Heart left ventricle (tissue), 16 donors: ENCODE measurements at regions of chr12 and their contacts with region 1.

Region 1: DNA sequence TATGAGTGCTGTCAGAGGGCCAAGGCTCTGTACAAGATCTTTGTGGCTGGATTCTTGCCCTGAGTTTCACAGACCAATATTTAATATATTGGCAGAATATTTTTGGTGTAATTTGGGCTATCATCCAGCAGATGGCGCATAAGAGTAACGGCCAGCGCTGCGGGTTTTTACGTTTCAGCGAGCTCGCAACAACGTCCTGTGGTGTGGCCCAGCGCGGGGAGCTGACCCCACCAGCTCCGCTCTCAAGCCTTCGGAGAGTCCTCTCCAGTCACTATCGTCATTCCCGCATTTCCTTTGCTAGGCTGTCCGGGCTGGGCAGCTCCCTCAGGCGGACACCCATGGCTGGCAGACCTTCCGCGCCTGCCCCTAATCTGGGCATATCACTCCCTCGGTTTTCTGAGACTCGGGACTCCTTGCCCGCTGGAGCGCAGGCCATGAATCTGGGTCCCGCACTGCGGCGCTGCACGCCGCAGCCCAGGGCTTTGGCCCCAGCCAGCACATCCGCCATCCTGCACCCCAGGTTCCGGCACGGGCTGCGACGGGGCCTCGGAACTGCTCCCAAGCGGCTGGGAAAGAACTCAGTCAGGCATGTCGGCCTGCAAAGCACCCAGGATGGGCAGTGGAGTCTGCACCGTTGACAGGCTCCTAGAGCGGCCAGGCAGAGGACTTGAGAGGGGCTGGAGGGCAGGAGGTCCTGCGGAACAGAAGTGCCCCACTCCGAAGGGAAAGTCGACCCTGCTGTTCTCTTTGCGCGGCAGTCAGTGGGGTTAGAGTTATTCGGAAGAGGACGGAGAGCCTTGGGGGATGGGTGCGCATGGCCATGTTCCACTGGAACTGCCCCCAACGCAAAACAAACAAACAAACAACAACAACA is 18.4 kb downstream of the OLR1 start:
- DNase-seq: peak; percentile 62 to 85 (median 71)
- ATAC-seq: peak; percentile 83 to 95 (median 94)
- H3K4me3 ChIP-seq: peak overlapping the region; percentile 34 to 74 (median 65)
- H3K27ac ChIP-seq: peak overlapping the region; percentile 30 to 90 (median 78)
- H3K4me1 ChIP-seq: peaks cover 0 to 14% (median 5%) of the 10 kb centered on the region in 12 donors
- H3K27me3 ChIP-seq: no peaks in the 10 kb centered on the region
- CTCF ChIP-seq: peak; percentile 73 to 90 (median 82)
- POLR2A ChIP-seq: no peak

Region 2: DNA sequence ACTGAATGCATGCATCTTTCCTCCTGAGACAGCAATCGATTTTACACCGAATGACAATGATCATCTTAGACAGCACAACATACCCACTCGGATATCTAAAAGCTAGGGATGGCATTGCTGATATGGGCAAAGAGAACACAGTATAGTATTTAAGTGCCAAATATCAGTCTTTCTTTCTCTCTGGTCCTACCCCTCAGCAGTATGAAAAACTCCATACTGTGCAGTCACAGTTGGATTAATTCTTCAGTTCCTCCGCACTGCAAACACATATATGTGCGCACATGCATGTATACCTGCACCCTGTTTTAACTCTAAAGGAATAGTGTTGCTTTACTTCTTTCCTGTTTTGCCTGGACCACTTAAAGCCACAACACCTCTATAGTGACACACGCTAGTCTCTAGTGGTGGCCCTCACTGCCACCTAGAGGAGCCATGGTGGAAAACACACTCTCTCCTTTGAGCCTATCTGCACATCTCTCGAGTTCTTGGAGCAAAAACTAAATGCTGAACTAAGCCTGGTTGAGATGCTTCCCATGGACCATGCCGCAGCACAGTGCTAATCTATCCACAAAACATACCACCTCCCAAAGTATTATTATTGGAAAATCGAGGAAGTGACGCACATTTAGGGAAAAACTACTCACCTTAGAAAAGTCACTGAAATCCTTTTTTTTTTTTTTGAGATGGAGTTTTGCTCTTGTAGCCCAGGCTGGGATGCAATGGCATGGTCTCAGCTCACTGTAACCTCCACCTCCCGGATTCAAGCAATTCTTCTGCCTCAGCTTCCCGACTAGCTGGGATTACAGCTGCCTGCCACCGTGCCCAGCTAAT is 37.3 kb after region 1 on chr12:
- intact Hi-C with region 1: loop called (anchors 1 to 5 kb)
- DNase-seq: peak in 4 of 5 donors; percentile 35 to 63 (median 52)
- ATAC-seq: peak; percentile 75 to 98 (median 95)
- H3K4me3 ChIP-seq: no peak overlapping the region
- H3K27ac ChIP-seq: no peak overlapping the region
- H3K4me1 ChIP-seq: peaks cover 0 to 9% (median 2%) of the 10 kb centered on the region in 12 donors
- H3K27me3 ChIP-seq: peaks cover 0 to 8% (median 0%) of the 10 kb centered on the region in 9 donors
- CTCF ChIP-seq: peak; percentile 56 to 88 (median 74)
- POLR2A ChIP-seq: no peak

Region 3: GRCh38 chr12:10354502-10354901 is 201.0 kb after region 1 on chr12:
- intact Hi-C with region 1: loop called in 1 of 10 experiments (anchors 5 kb)
- DNase-seq: no peak
- ATAC-seq: no peak
- H3K4me3 ChIP-seq: no peak overlapping the region
- H3K27ac ChIP-seq: no peak overlapping the region
- H3K4me1 ChIP-seq: no peaks in the 10 kb centered on the region
- H3K27me3 ChIP-seq: no peaks in the 10 kb centered on the region
- CTCF ChIP-seq: no peak
- POLR2A ChIP-seq: no peak